Left ventricle myocardium superior (tissue), 1 donor: ENCODE measurements at regions of chr2 and their contacts with region 1.

Region 1: DNA sequence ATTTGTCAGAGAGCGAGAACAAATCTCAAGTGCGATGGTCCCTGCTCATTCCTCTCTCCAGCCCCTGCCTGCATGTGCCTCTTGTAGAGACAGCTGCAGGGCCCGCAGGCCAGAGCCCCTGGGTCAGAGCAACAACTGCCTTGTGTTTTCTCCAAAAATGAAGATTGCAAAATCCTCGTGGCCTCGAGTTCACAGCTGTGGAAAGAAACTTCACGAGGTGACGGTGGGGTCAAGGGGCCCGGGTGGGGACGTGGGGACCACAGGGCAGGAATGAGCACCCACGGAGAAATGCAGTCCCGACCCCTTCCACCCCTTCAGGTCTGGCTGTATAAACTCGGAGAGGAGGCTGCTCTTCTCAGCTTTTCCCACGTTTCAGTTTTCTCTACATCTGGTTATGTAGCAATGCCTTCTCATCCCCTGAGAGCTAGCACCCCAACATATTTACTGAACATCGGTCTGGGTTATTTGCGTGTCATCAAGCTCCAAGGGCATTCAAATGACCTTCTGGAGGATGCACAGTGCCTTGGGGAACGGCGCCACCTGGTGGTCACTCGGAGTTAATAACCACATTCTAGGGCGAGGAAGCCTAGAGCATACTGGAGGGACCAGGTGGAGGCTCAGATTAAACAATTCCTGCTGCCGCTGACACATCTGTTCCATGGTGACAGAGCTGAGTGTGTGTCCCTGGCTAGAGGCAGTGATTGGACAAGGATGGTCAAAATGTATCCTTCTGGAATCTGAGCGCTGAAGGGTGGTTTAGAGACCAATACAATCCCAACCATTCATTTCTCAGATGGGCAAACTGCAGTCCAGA is 91.4 kb upstream of the CYRIA start:
- DNase-seq: peak; percentile 85
- ATAC-seq: peak; percentile 90

Region 2: DNA sequence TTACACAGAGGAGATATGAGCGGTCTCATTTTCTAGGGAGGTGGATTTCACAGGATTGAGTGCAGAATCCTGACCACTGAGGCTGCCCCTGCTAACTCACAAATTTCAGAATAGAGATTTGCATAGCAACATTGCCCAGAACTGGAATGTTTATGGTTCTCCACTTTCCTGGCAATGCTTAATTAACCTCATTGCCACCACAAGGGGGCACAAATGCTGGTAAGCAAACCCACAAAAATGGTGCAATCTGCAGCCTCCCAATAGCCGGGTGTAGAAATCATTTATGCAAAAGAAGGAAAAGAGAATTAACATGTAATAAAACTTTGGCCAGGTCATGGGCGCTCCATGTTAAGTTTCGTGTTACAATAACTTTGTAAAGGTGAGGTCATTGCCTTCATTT is 203.8 kb before region 1 on chr2:
- intact Hi-C with region 1: loop called (anchors 5 kb)
- DNase-seq: no peak
- ATAC-seq: peak; percentile 47

Region 3: GRCh38 chr2:16925145-16925544 is 168.1 kb after region 1 on chr2:
- intact Hi-C with region 1: no loop called
- DNase-seq: no peak
- ATAC-seq: no peak